ENCODE measurements at regions of chr4 and their contacts with region 1.

Region 1: GRCh38 chr4:109433205-109434006 is at the start of gene SEC24B:
- DNase-seq: peak; percentile 86
- H3K4me3 ChIP-seq: peak within 1 kb of the TSS; percentile 63 to 84 (median 76)
- H3K4me3 Mint-ChIP-seq: peak within 1 kb of the TSS; percentile 84
- H3K27ac ChIP-seq: peak within 1 kb of the TSS; percentile 68 to 87
- H3K27ac Mint-ChIP-seq: peak within 1 kb of the TSS; percentile 71 to 89 (median 81)
- H3K4me1 ChIP-seq: peaks cover 21 to 31% of the 10 kb centered on the region in 2 donors
- H3K4me1 Mint-ChIP-seq: peaks cover 33% of the 10 kb centered on the region
- H3K27me3 ChIP-seq: no peaks in the 10 kb centered on the region
- H3K27me3 Mint-ChIP-seq: peaks cover 0 to 2% (median 0%) of the 10 kb centered on the region in 3 donors
- CTCF ChIP-seq: peak; percentile 97
- polyA plus RNA-seq, gene SEC24B: 8.0 to 27.4 (median 11.8) TPM

Region 2: DNA sequence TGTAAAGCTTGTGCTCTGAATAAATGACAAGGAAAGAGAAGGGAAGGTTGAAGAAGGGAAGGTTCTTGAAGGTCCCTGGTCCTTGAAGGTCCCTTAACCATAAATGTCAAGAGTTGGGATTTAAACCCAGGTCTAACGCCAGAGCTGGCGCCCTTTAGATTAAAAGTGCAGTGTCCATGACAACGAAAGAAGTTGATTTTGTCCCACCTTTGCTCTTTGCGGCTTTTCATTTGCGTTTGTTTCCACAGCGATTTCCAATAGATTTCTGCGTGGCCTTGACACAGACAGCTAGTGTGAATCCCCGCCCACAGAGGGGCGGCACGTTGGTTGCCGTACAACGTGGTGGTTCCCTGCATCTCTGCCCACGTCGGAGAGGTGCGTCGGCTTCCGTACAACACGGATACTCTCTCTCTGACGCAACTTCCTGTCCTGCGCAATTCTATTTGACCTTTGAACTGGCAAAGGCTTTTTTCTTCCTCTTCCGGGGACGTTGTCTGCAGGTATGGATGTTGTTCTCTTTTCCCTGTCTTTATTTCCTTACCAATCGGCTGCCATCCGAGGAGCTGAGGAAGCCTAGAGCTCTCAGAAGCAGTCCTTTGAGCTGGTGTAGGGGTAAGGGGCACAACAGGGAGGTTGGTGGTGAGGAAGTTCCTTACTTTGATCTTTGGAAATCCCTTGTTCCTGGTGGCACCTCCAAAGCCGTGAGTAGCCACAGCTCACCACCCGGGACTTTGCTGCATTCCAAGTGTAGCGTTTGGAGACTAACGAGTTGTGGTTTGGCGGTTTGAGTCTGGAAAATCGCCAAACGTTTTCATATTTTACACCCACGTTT is 813.1 kb before region 1 on chr4 and contains the start of gene RPL34:
- intact Hi-C with region 1: loop called in 1 of 2 experiments (anchors 10 kb)
- DNase-seq: peak; percentile 98 to 99 (median 98)
- H3K4me3 ChIP-seq: peak within 1 kb of the TSS; percentile 90 to 100 (median 96)
- H3K4me3 Mint-ChIP-seq: peak within 1 kb of the TSS; percentile 88 to 90
- H3K27ac ChIP-seq: peak within 1 kb of the TSS; percentile 92 to 93
- H3K27ac Mint-ChIP-seq: peak within 1 kb of the TSS; percentile 90 to 95 (median 93)
- H3K4me1 ChIP-seq: peaks cover 16 to 18% of the 10 kb centered on the region in 2 donors
- H3K4me1 Mint-ChIP-seq: peaks cover 23% of the 10 kb centered on the region
- H3K27me3 ChIP-seq: no peaks in the 10 kb centered on the region
- H3K27me3 Mint-ChIP-seq: no peaks in the 10 kb centered on the region
- CTCF ChIP-seq: no peak
- polyA plus RNA-seq, gene RPL34: 1,490 to 2,624 (median 1,519) TPM

Region 3: GRCh38 chr4:109053257-109053656 is 380.1 kb before region 1 on chr4:
- intact Hi-C with region 1: no loop called
- DNase-seq: no peak
- H3K4me3 ChIP-seq: no peak overlapping the region
- H3K4me3 Mint-ChIP-seq: peak overlapping the region in 1 of 2 donors; percentile 1
- H3K27ac ChIP-seq: no peak overlapping the region
- H3K27ac Mint-ChIP-seq: peak overlapping the region in 1 of 7 donors; percentile 67
- H3K4me1 ChIP-seq: peaks cover 9 to 23% of the 10 kb centered on the region in 2 donors
- H3K4me1 Mint-ChIP-seq: peaks cover 21% of the 10 kb centered on the region
- H3K27me3 ChIP-seq: no peaks in the 10 kb centered on the region
- H3K27me3 Mint-ChIP-seq: no peaks in the 10 kb centered on the region
- CTCF ChIP-seq: no peak

Region 4: GRCh38 chr4:109444182-109444844 is 10.9 kb after region 1 on chr4:
- intact Hi-C with region 1: loop called in 1 of 2 experiments (anchors 1 kb)
- DNase-seq: peak; percentile 42 to 74 (median 62)
- H3K4me3 ChIP-seq: no peak overlapping the region
- H3K4me3 Mint-ChIP-seq: no peak overlapping the region
- H3K27ac ChIP-seq: peak overlapping the region in 1 of 2 donors; percentile 34
- H3K27ac Mint-ChIP-seq: peak overlapping the region in 5 of 7 donors; percentile 22 to 71 (median 45)
- H3K4me1 ChIP-seq: peaks cover 25 to 33% of the 10 kb centered on the region in 2 donors
- H3K4me1 Mint-ChIP-seq: peaks cover 42% of the 10 kb centered on the region
- H3K27me3 ChIP-seq: no peaks in the 10 kb centered on the region
- H3K27me3 Mint-ChIP-seq: peaks cover 0 to 1% (median 0%) of the 10 kb centered on the region in 3 donors
- CTCF ChIP-seq: no peak

Region 5: GRCh38 chr4:109548655-109549054 is 115.2 kb after region 1 on chr4:
- intact Hi-C with region 1: loop called in 1 of 2 experiments (anchors 5 kb)
- DNase-seq: peak; percentile 89 to 95 (median 94)
- H3K4me3 ChIP-seq: peak overlapping the region in 2 of 3 experiments; percentile 19 to 38
- H3K4me3 Mint-ChIP-seq: peak overlapping the region in 1 of 2 donors; percentile 73
- H3K27ac ChIP-seq: peak overlapping the region; percentile 20 to 90
- H3K27ac Mint-ChIP-seq: peak overlapping the region; percentile 84 to 97 (median 95)
- H3K4me1 ChIP-seq: peaks cover 19 to 24% of the 10 kb centered on the region in 2 donors
- H3K4me1 Mint-ChIP-seq: peaks cover 30% of the 10 kb centered on the region
- H3K27me3 ChIP-seq: no peaks in the 10 kb centered on the region
- H3K27me3 Mint-ChIP-seq: peaks cover 0 to 2% (median 0%) of the 10 kb centered on the region in 3 donors
- CTCF ChIP-seq: no peak

Region 6: GRCh38 chr4:109559983-109560686 is 126.7 kb after region 1 on chr4 and contains the start of gene MCUB:
- intact Hi-C with region 1: loop called in 1 of 2 experiments (anchors 5 kb)
- DNase-seq: peak; percentile 75 to 87 (median 79)
- H3K4me3 ChIP-seq: peak within 1 kb of the TSS; percentile 63 to 96 (median 89)
- H3K4me3 Mint-ChIP-seq: peak within 1 kb of the TSS; percentile 91 to 97
- H3K27ac ChIP-seq: peak within 1 kb of the TSS; percentile 93 to 97
- H3K27ac Mint-ChIP-seq: peak within 1 kb of the TSS; percentile 96 to 99 (median 98)
- H3K4me1 ChIP-seq: peaks cover 23 to 35% of the 10 kb centered on the region in 2 donors
- H3K4me1 Mint-ChIP-seq: peaks cover 52% of the 10 kb centered on the region
- H3K27me3 ChIP-seq: no peaks in the 10 kb centered on the region
- H3K27me3 Mint-ChIP-seq: peaks cover 3 to 6% (median 4%) of the 10 kb centered on the region in 3 donors
- CTCF ChIP-seq: no peak
- polyA plus RNA-seq, gene MCUB: 117 to 125 (median 123) TPM

Region 7: GRCh38 chr4:109702950-109703663 is 269.7 kb after region 1 on chr4 and contains the start of gene CASP6:
- intact Hi-C with region 1: loop called in 1 of 2 experiments (anchors 10 kb)
- DNase-seq: peak; percentile 58 to 63 (median 62)
- H3K4me3 ChIP-seq: peak within 1 kb of the TSS; percentile 52 to 93 (median 68)
- H3K4me3 Mint-ChIP-seq: peak within 1 kb of the TSS; percentile 94 to 97
- H3K27ac ChIP-seq: peak within 1 kb of the TSS; percentile 52 to 69
- H3K27ac Mint-ChIP-seq: peak within 1 kb of the TSS; percentile 77 to 89 (median 83)
- H3K4me1 ChIP-seq: peaks cover 21 to 30% of the 10 kb centered on the region in 2 donors
- H3K4me1 Mint-ChIP-seq: peaks cover 29% of the 10 kb centered on the region
- H3K27me3 ChIP-seq: no peaks in the 10 kb centered on the region
- H3K27me3 Mint-ChIP-seq: peaks cover 0 to 2% (median 2%) of the 10 kb centered on the region in 3 donors
- CTCF ChIP-seq: peak; percentile 77
- polyA plus RNA-seq, gene CASP6: 4.7 to 24.4 (median 23.3) TPM

Region 8: GRCh38 chr4:109815151-109816081 is 382.0 kb after region 1 on chr4 and contains the start of gene GAR1:
- intact Hi-C with region 1: loop called (anchors 5 kb)
- DNase-seq: peak; percentile 87 to 89 (median 87)
- H3K4me3 ChIP-seq: peak within 1 kb of the TSS; percentile 42 to 86 (median 75)
- H3K4me3 Mint-ChIP-seq: peak within 1 kb of the TSS; percentile 97 to 98
- H3K27ac ChIP-seq: peak within 1 kb of the TSS; percentile 79 to 97
- H3K27ac Mint-ChIP-seq: peak within 1 kb of the TSS; percentile 96 to 99 (median 97)
- H3K4me1 ChIP-seq: peaks cover 20 to 29% of the 10 kb centered on the region in 2 donors
- H3K4me1 Mint-ChIP-seq: peaks cover 31% of the 10 kb centered on the region
- H3K27me3 ChIP-seq: no peaks in the 10 kb centered on the region
- H3K27me3 Mint-ChIP-seq: peaks cover 0 to 1% (median 0%) of the 10 kb centered on the region in 3 donors
- CTCF ChIP-seq: no peak
- polyA plus RNA-seq, gene GAR1: 4.3 to 8.7 (median 4.7) TPM

Measured in CD14-positive monocyte (primary cell).